ENCODE measurements at regions of chrX and their contacts with region 1.

Region 1: DNA sequence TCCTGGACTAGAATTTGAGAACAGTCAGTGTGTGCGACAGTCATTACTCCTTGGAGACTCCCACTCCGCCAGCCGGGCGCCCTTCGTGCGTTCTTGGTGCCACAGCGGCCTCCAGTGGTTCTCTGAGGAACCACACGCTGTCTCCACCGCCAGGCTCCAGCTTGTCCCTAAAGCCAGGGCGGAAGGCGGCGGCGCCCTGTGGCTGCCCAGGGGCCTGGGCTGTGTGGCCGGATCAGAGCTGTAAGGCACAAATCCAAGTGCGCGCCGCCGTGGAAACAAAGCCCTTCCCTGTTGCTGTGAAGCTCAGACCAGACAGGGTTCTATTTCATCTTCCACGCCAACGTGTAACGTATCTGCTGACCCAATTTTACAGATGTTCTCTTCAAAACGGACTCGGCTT is 34.2 kb downstream of the IDS start:
- DNase-seq: peak; percentile 64
- H3K4me3 ChIP-seq: no peak overlapping the region
- H3K27ac ChIP-seq: no peak overlapping the region
- H3K4me1 ChIP-seq: no peaks in the 10 kb centered on the region
- CTCF ChIP-seq: peak; percentile 81

Region 2: DNA sequence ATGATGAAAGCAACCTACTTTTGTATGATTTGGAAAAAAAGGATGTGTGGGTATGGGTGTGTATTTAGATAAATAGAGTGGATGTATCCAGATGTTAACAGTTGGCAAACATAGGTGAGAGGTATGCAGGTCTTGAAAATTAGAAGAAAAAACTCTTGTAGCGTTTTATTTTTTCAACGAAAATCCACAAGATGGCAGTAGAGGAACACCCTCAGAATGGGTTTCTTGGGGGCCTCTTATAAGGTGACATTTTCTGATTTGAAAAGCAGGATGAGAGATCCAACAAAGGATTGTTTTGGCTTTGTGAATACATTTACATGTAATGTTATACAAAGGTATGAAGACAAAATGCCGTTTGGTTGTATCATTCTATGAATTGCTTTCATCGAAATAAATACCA is 1421.5 kb before region 1 on chrX:
- CTCF ChIA-PET with region 1: no interaction called
- POLR2A ChIA-PET with region 1: no interaction called
- intact Hi-C with region 1: loop called (anchors 2 kb)
- DNase-seq: peak; percentile 60
- H3K4me3 ChIP-seq: no peak overlapping the region
- H3K27ac ChIP-seq: no peak overlapping the region
- H3K4me1 ChIP-seq: no peaks in the 10 kb centered on the region
- CTCF ChIP-seq: peak; percentile 82

Region 3: GRCh38 chrX:148133105-148133725 is 1337.7 kb before region 1 on chrX:
- CTCF ChIA-PET with region 1: interaction called, 3 read pairs
- POLR2A ChIA-PET with region 1: no interaction called
- intact Hi-C with region 1: loop called (anchors 1 kb)
- DNase-seq: peak; percentile 64
- H3K4me3 ChIP-seq: no peak overlapping the region
- H3K27ac ChIP-seq: no peak overlapping the region
- H3K4me1 ChIP-seq: peaks cover 14% of the 10 kb centered on the region
- CTCF ChIP-seq: peak; percentile 72

Region 4: DNA sequence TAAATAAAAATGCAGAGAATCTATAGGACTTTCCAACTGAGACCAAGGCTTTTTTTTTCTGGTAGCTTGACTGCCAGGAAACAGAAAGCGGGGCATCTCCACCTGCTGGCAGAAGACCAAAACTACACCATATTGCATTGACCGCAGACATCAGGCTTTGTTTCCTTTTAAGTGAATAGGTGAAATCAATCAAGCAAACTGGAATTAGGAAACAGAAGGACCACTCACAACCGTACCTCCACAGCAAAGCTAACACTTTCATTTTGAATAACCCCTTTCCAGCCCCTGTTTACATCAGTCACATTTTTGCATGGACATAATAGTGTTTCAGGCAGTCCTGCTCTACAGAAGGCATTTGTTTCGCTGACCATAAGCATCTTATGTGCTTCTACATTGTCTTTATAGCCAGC is 184.0 kb before region 1 on chrX:
- CTCF ChIA-PET with region 1: no interaction called
- POLR2A ChIA-PET with region 1: no interaction called
- intact Hi-C with region 1: loop called (anchors 10 kb)
- DNase-seq: peak; percentile 57
- H3K4me3 ChIP-seq: no peak overlapping the region
- H3K27ac ChIP-seq: no peak overlapping the region
- H3K4me1 ChIP-seq: no peaks in the 10 kb centered on the region
- CTCF ChIP-seq: peak; percentile 79

Region 5: DNA sequence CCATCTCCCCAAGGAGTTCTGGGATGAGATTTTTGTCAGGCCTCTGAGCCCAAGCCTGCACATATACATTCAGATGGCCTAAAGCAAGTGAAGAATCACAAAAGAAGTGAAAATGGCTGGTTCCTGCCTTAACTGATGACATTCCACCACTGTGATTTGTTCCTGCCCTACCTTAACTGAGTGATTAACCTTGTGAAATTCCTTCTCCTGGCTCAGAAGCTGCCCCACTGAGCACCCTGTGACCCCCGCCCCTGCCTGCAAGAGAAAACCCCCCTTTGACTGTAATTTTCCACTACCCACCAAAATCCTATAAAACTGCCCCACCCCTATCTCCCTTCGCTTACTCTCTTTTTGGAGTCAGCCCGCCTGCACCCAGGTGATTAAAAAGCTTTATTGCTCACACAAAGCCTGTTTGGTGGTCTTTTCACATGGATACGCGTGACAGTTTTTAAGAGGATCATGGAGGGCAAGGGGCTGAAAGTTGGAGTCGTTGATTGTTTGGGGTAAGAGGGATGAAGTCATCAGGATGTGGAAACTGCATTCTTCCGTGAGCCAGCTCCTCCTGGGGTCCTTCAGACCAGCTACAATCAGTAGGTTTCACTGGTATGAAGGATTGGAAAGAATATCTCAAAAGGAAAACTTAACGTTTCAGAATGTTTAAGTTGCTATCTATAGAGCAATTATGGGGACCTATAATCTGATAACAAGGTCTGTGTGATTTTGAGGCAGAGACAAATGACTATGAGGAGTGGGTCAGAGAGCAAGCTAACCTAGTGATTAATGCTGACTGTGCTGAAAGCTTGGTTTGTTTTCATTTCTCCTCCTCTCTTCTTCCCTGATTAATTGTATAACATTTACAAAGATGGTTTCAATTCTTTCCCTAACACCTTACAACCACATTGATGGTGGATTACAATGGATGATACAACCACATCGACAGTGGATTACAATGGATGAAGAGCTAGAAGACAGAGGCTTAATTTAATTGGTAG is 212.3 kb after region 1 on chrX:
- CTCF ChIA-PET with region 1: no interaction called
- POLR2A ChIA-PET with region 1: no interaction called
- intact Hi-C with region 1: no loop called
- DNase-seq: no peak
- H3K4me3 ChIP-seq: no peak overlapping the region
- H3K27ac ChIP-seq: no peak overlapping the region
- H3K4me1 ChIP-seq: no peaks in the 10 kb centered on the region
- CTCF ChIP-seq: no peak